PC-9 (cell line): ENCODE measurements at regions of chr5 and their contacts with region 1.

Region 1: DNA sequence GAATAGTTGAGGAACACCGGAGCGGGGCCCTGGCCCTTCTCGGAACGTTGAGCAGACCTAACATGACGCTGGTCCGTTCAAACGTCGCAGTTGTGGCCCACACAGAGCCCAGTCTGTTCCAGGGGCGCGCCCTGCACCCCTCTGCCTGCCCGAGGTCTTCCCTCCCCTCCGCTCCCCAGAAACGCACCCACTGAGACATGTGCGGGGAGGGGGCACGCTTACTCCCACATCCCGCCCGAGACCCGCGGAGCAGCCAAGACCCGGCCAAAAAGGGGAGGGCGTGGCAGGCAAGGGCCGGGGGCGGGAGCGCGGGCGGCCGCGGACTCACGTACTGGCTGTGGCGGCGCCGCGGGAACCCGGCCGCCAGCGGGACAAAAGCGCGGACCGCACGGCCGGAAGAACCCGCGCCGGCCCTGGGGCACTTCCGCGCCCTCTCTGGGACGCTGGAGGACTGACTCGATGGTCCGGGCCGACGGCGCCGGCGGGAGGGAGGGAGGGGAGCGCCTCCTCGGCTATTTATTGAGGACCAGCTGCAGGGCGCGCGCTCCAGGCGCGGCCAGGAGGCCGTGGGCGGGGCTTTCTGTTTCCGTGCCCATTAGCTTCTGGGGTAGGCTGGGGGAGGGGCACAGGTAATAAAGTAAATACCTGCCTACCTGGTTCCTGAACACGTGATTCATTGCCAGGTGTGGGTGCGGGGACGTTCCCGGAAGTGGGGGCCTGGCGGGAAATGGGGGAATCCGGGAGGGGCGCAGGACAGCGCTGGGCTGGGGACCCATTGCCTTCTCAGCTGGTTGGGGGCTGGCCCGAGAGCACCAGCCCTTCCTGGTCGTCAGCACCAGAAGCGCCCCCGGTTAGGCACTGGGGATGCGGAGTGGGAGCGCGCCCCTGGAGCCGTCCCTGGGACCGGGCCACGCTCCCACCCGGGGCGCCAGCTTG is at the start of gene ZFP62:
- DNase-seq: peak; percentile 83 to 96
- H3K4me3 ChIP-seq: peak within 1 kb of the TSS; percentile 98
- H3K27ac ChIP-seq: peak within 1 kb of the TSS; percentile 84
- H3K4me1 ChIP-seq: peaks cover 18% of the 10 kb centered on the region; the same call in 1 of the 2 replicates
- H3K27me3 ChIP-seq: no peaks in the 10 kb centered on the region
- CTCF ChIP-seq: peak; percentile 35; the same call in 1 of the 2 replicates
- total RNA-seq, gene ZFP62: 48.6 and 57.3 TPM in 2 replicates

Region 2: DNA sequence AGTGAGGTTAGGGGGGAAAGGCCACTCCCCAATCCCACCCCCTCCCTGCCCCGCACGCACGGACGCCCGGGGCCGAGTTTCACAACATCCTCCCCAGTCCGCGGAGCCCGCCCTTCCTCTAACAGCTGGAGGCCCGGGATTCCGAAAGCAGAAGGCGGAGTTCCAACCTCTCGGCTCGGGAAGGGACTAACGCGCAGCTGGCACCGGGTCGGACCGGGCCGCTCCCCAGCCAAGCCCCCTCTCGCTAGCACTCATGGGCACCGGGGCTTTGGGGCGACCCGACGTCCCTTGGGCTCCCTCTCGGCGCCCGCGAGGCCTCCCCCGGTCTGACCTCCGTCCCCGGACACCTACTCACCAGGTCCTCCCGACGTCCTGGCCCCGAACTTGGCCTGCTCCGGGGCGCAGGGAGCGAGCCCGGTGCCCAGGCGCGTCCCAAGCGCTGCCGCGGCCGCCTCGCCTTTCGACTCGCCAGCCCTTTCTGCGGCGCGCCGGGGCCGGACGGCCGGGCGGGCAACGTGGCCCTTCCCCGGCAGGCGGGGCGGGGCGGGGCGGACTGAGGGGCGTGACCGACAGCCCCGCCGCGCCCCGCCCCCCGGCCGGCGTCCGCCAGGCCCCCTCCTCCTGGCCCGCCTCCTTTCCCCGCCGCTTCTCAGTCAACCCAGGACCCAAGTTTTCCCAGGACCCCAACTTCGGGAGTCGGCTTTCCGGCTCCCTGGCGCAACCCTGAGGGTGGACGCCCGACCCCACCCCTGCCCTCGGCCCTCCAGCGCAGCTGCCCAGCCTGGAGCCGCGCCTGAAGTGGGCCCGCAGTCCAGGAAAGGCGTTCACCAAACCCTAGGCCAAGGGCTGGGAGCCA is 58.6 kb before region 1 on chr5 and contains the start of gene MGAT1:
- CTCF ChIA-PET with region 1: no interaction called
- POLR2A ChIA-PET with region 1: interaction called, 6 read pairs
- intact Hi-C with region 1: loop called (anchors 1 kb)
- DNase-seq: peak; percentile 60 to 77
- H3K4me3 ChIP-seq: peak within 1 kb of the TSS; percentile 95
- H3K27ac ChIP-seq: peak within 1 kb of the TSS; percentile 63
- H3K4me1 ChIP-seq: peaks cover 41% of the 10 kb centered on the region
- H3K27me3 ChIP-seq: no peaks in the 10 kb centered on the region
- CTCF ChIP-seq: no peak
- total RNA-seq, gene MGAT1: 96.6 and 103 TPM in 2 replicates

Region 3: GRCh38 chr5:180831139-180832048 is 29.8 kb before region 1 on chr5:
- CTCF ChIA-PET with region 1: interaction called, 4 read pairs
- POLR2A ChIA-PET with region 1: no interaction called
- intact Hi-C with region 1: loop called (anchors 1 kb)
- DNase-seq: peak; percentile 49 to 82
- H3K4me3 ChIP-seq: peak overlapping the region; percentile 72
- H3K27ac ChIP-seq: peak overlapping the region; percentile 72
- H3K4me1 ChIP-seq: peaks cover 23% of the 10 kb centered on the region
- H3K27me3 ChIP-seq: no peaks in the 10 kb centered on the region
- CTCF ChIP-seq: 0 out of 2 replicates have a peak, but pooled peaks have one; percentile 27

Region 4: DNA sequence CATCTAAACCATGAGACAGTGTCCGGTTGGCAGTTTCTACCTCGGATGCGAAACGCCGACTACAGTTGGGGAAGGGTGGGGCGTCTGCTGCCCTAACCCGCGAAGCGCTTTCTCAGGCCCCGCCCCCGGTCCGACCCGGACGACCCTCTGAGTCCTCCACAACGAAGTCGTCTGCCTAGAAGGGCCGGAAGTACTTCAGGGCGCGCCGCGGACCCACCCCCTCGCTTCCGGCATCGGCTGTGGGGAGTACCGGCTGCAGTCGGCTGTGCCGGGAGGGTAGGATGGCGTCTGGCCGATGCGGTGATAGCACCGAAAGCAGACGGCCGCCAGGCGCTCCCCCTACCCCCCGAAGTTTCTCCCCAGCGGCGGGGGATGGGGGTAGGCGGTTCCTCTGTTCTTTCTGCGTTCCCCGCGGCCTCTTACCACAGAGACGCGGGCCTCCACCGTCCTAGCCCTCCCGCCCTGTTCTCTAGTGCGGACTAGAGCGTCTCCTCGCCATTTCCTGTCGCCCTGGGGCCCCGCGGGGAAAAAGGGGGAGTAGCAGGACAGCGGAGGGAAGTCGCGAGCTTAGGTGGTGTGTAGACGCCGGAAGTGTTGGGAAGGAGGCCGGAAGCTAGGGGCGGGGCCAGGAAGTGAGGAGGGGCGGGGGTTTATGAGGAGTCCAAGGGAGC is 362.0 kb after region 1 on chr5 and contains the start of gene TRIM41:
- CTCF ChIA-PET with region 1: no interaction called
- POLR2A ChIA-PET with region 1: no interaction called
- intact Hi-C with region 1: loop called (anchors 1 kb)
- DNase-seq: peak; percentile 93 to 99
- H3K4me3 ChIP-seq: peak within 1 kb of the TSS; percentile 68
- H3K27ac ChIP-seq: peak within 1 kb of the TSS; percentile 89
- H3K4me1 ChIP-seq: peaks cover 15% of the 10 kb centered on the region; the same call in 1 of the 2 replicates
- H3K27me3 ChIP-seq: no peaks in the 10 kb centered on the region
- CTCF ChIP-seq: no peak
- total RNA-seq, gene TRIM41: 57.6 and 66.0 TPM in 2 replicates

Region 5: GRCh38 chr5:181243512-181244343 is 382.6 kb after region 1 on chr5 and contains the start of gene RACK1:
- CTCF ChIA-PET with region 1: no interaction called
- POLR2A ChIA-PET with region 1: no interaction called
- intact Hi-C with region 1: loop called (anchors 5 kb)
- DNase-seq: peak; percentile 73 to 89
- H3K4me3 ChIP-seq: peak within 1 kb of the TSS; percentile 95
- H3K27ac ChIP-seq: peak within 1 kb of the TSS; percentile 97
- H3K4me1 ChIP-seq: peaks cover 29% of the 10 kb centered on the region
- H3K27me3 ChIP-seq: no peaks in the 10 kb centered on the region
- CTCF ChIP-seq: no peak
- total RNA-seq, gene RACK1: 2,373 and 2,766 TPM in 2 replicates